Posterior vena cava (tissue), 2 donors: ENCODE measurements at regions of chr14 and their contacts with region 1.

Region 1: DNA sequence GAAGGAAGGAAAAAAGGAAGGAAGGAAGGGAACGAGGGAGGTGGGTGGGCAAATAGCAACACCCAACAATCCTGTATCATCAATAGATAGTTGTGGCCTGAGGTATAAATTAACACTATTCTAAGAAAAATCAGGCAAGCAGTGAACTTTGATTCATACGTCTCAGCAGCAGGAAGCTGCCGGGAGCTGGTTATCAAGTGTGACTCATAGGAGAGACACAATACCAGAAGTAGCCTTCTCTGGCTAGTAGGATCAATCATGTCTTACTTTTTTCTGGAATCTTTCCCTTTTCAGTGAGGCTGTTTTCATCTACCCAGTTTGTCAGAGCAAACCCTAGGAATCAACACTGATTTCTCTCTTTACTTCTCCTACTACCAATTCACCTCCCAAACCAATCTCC is 780.5 kb downstream of the NRXN3 start:
- DNase-seq: no peak

Region 2: DNA sequence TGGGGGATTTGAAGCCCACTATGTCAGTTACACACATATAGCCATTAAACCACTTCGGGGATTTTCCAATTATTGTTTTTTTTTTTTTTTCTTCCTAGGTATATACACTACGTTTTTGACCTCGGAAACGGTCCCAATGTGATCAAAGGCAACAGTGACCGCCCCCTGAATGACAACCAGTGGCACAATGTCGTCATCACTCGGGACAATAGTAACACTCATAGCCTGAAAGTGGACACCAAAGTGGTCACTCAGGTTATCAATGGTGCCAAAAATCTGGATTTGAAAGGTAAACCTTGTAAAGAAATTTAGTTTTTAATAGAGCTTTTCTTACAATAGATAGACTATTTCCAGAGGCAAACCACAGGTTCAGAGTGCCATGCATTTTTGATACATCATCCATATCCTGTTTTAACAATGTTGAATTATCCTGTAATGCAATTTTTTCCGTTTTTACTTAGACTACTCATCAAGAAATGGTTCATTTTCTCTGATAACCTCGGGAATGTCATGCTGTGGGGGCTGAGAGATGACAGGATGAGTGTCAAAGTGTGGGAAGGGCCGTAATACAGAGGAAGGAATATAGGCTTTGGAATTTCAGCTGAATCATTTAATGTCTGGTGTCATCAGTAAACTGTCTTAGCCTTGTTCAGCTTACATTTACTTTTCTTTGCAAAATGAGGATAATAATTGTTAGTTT is 16.6 kb after region 1 on chr14:
- intact Hi-C with region 1: loop called in 1 of 2 experiments (anchors 1 kb)
- DNase-seq: no peak

Region 3: GRCh38 chr14:79229383-79229909 is 278.8 kb after region 1 on chr14:
- intact Hi-C with region 1: no loop called
- DNase-seq: no peak